CD4-positive, alpha-beta memory T cell (primary cell): ENCODE measurements at regions of chr17 and their contacts with region 1.

Region 1: DNA sequence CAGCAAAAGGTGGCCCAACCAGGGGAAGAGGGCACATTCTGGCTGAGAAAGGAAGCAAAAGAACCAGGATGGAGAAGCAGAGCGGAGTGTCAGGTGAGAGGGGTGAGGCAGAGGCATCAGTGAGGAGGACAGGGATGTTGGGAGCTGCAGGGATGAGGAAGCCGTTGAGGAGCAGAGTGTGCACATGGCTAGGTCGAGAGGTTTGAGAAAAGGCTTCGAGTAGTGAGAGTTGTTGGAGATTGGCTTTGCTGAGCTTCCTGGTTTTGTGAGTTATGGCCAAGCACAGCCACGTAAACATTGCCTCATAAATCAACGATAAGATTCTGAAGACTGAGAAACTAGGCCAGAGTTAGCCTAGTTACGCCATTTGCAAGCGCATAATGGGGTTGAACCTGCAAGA is 26.9 kb downstream of the DNAH2 start:
- DNase-seq: no peak
- H3K4me3 ChIP-seq: no peak overlapping the region
- H3K4me3 Mint-ChIP-seq: no peak overlapping the region
- H3K27ac ChIP-seq: no peak overlapping the region
- H3K27ac Mint-ChIP-seq: no peak overlapping the region
- H3K4me1 ChIP-seq: no peaks in the 10 kb centered on the region
- H3K4me1 Mint-ChIP-seq: peaks cover 0 to 4% (median 2%) of the 10 kb centered on the region in 4 donors
- H3K27me3 ChIP-seq: no peaks in the 10 kb centered on the region
- H3K27me3 Mint-ChIP-seq: peaks cover 14 to 18% of the 10 kb centered on the region in 2 donors

Region 2: GRCh38 chr17:7700510-7700909 is 43.9 kb before region 1 on chr17:
- CTCF ChIA-PET with region 1: no interaction called
- POLR2A ChIA-PET with region 1: no interaction called
- intact Hi-C with region 1: no loop called
- DNase-seq: no peak
- H3K4me3 ChIP-seq: no peak overlapping the region
- H3K4me3 Mint-ChIP-seq: no peak overlapping the region
- H3K27ac ChIP-seq: no peak overlapping the region
- H3K27ac Mint-ChIP-seq: no peak overlapping the region
- H3K4me1 ChIP-seq: peaks cover 9% of the 10 kb centered on the region
- H3K4me1 Mint-ChIP-seq: peaks cover 4 to 14% (median 8%) of the 10 kb centered on the region in 4 donors
- H3K27me3 ChIP-seq: peaks cover 13% of the 10 kb centered on the region
- H3K27me3 Mint-ChIP-seq: peaks cover 14 to 23% of the 10 kb centered on the region in 2 donors

Region 3: DNA sequence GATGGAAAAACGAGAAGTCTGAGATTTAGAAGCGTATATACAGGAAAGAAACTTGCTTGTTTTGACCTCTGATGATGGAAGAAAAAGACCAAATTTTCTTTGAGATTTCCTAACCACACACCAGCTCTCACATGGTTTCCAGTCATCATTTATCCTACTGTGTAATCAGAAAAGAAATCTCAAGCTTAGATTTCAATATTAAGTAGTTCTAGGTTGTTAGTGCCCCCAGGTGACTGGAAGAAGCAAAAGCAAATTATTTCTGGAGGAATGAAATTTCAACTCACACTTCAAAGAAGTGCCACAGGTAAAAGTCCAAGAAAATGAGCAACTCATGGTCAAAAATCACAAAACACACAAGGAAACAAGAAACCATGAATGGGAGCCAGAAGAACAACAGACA is 37.8 kb after region 1 on chr17:
- CTCF ChIA-PET with region 1: no interaction called
- POLR2A ChIA-PET with region 1: no interaction called
- intact Hi-C with region 1: no loop called
- DNase-seq: no peak
- H3K4me3 ChIP-seq: no peak overlapping the region
- H3K4me3 Mint-ChIP-seq: peak overlapping the region in 1 of 8 donors; percentile 23
- H3K27ac ChIP-seq: no peak overlapping the region
- H3K27ac Mint-ChIP-seq: no peak overlapping the region
- H3K4me1 ChIP-seq: no peaks in the 10 kb centered on the region
- H3K4me1 Mint-ChIP-seq: peaks cover 0 to 2% (median 0%) of the 10 kb centered on the region in 4 donors
- H3K27me3 ChIP-seq: peaks cover 7% of the 10 kb centered on the region
- H3K27me3 Mint-ChIP-seq: peaks cover 6 to 9% of the 10 kb centered on the region in 2 donors

Region 4: DNA sequence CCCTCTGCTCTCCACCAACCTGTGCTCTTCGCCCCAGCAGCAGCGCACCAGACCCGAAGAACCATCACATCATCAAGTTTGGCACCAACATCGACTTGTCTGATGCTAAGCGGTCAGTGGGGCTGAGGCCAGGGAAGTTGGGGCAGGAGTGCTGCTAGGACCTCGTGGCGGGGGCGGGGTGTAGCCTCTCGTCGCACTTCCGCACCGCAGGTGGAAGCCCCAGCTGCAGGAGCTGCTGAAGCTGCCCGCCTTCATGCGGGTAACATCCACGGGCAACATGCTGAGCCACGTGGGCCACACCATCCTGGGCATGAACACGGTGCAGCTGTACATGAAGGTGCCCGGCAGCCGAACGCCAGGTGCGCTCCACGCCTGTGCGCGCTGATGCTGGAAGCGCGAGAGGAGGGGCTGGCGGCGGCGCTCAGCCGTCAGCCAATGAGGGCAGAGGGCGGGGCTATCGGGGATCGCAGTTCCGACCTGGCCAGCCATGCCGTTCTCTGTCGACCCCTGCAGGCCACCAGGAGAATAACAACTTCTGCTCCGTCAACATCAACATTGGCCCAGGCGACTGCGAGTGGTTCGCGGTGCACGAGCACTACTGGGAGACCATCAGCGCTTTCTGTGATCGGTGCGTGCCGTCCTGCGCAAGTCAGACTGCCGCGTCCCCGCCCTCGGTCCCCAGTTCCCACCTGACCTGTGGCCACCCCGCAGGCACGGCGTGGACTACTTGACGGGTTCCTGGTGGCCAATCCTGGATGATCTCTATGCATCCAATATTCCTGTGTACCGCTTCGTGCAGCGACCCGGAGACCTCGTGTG is 107.2 kb after region 1 on chr17:
- CTCF ChIA-PET with region 1: no interaction called
- POLR2A ChIA-PET with region 1: no interaction called
- intact Hi-C with region 1: loop called (anchors 1 kb)
- DNase-seq: peak; percentile 93 to 95 (median 95)
- H3K4me3 ChIP-seq: peak overlapping the region in 1 of 2 donors; percentile 30
- H3K4me3 Mint-ChIP-seq: peak overlapping the region; percentile 71 to 87 (median 78)
- H3K27ac ChIP-seq: peak overlapping the region; percentile 61
- H3K27ac Mint-ChIP-seq: peak overlapping the region; percentile 88 to 94 (median 93)
- H3K4me1 ChIP-seq: peaks cover 30% of the 10 kb centered on the region
- H3K4me1 Mint-ChIP-seq: peaks cover 15 to 21% (median 18%) of the 10 kb centered on the region in 4 donors
- H3K27me3 ChIP-seq: no peaks in the 10 kb centered on the region
- H3K27me3 Mint-ChIP-seq: no peaks in the 10 kb centered on the region

Region 5: DNA sequence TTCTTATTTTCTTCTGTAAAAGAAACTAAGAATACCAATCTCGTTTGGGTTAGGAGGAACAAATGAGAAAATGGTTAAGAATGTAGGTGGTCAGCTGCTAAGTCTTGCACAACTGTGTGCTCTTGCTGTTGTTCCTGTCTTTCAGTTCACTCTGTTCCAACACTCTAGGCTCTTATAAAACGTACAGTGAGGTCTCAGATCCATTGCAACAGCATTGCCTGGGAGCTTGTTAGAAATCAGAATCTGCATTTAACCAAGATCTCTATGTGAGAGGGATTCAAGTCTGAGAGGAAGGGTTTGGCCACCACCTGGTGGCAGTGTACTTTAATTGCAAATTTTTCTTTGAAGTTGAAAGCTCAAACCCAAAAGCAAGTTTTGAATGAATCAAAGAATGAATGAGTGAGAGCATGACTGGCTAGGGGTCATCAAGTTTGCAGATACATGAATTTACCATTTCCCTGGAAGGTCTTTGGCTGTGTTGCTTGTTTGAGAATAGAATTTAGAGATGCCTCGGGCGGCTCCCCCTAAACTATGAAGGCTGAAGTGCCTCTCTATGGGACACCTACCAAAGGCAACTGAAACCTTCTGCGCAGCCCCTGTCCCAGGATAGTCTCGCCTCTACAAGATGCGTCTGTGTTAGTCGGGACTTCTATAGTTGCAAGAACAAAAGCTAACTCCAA is 297.0 kb after region 1 on chr17:
- CTCF ChIA-PET with region 1: interaction called, 13 read pairs
- POLR2A ChIA-PET with region 1: no interaction called
- intact Hi-C with region 1: loop called (anchors 1 kb)
- DNase-seq: peak; percentile 29 to 49 (median 35)
- H3K4me3 ChIP-seq: no peak overlapping the region
- H3K4me3 Mint-ChIP-seq: no peak overlapping the region
- H3K27ac ChIP-seq: no peak overlapping the region
- H3K27ac Mint-ChIP-seq: no peak overlapping the region
- H3K4me1 ChIP-seq: no peaks in the 10 kb centered on the region
- H3K4me1 Mint-ChIP-seq: peaks cover 0 to 4% (median 0%) of the 10 kb centered on the region in 4 donors
- H3K27me3 ChIP-seq: no peaks in the 10 kb centered on the region
- H3K27me3 Mint-ChIP-seq: peaks cover 15 to 16% of the 10 kb centered on the region in 2 donors